ENCODE measurements at regions of chr17 and their contacts with region 1.

Region 1: GRCh38 chr17:28571255-28572122 is at the start of gene PIGS:
- DNase-seq: peak; percentile 78 to 95 (median 88)
- ATAC-seq: peak; percentile 96
- H3K4me3 ChIP-seq: peak within 1 kb of the TSS; percentile 95
- H3K4me3 Mint-ChIP-seq: peak within 1 kb of the TSS; percentile 94
- H3K27ac ChIP-seq: peak within 1 kb of the TSS; percentile 66 to 85
- H3K27ac Mint-ChIP-seq: peak within 1 kb of the TSS; percentile 91
- H3K4me1 ChIP-seq: peaks cover 55% of the 10 kb centered on the region
- H3K4me1 Mint-ChIP-seq: peaks cover 65% of the 10 kb centered on the region
- H3K27me3 ChIP-seq: no peaks in the 10 kb centered on the region
- H3K27me3 Mint-ChIP-seq: no peaks in the 10 kb centered on the region
- CTCF ChIP-seq: no peak
- total RNA-seq, gene PIGS: 73.8 to 76.4 TPM

Region 2: GRCh38 chr17:28252436-28252835 is 319.1 kb before region 1 on chr17:
- CTCF ChIA-PET with region 1: no interaction called
- POLR2A ChIA-PET with region 1: no interaction called
- intact Hi-C with region 1: no loop called
- DNase-seq: no peak
- ATAC-seq: no peak
- H3K4me3 ChIP-seq: no peak overlapping the region
- H3K4me3 Mint-ChIP-seq: no peak overlapping the region
- H3K27ac ChIP-seq: no peak overlapping the region
- H3K27ac Mint-ChIP-seq: no peak overlapping the region
- H3K4me1 ChIP-seq: peaks cover 12% of the 10 kb centered on the region
- H3K4me1 Mint-ChIP-seq: peaks cover 8% of the 10 kb centered on the region
- H3K27me3 ChIP-seq: peaks cover 15 to 29% of the 10 kb centered on the region in 2 experiments
- H3K27me3 Mint-ChIP-seq: peaks cover 49% of the 10 kb centered on the region
- CTCF ChIP-seq: no peak

Region 3: DNA sequence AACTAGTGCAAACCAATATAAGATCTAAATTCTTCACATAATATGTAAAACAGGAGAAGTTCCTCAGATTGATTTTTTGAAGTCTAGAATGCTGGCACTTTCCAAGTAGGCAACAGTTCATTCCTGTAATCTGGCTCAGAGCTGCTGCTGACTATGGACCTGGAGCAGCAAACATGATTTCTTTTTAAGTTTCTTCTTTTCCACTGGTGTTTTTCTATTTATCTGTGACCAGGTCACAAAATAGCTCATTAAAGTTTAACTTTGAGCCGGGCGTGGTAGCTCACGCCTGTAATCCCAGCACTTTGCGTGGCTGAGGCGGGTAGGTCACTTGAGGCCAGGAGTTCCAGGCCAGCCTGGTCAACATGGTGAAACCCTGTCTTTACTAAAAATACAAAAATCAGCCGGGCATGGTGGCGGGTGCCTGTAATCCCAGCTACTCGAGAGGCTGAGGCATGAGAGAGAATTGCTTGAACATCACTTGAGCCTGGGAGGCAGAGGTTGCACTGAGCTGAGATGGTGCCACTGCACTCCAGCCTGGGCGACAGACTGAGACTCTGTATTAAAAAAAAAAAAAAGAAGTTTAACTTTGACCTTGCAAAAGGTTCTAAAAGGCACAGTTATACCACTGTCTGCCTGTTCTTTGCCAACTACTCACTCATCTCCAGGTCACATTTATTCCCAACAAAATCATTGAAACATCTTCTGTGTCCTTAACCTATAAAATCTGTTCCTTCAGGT is 127.4 kb before region 1 on chr17:
- CTCF ChIA-PET with region 1: no interaction called
- POLR2A ChIA-PET with region 1: no interaction called
- intact Hi-C with region 1: no loop called
- DNase-seq: no peak
- ATAC-seq: no peak
- H3K4me3 ChIP-seq: no peak overlapping the region
- H3K4me3 Mint-ChIP-seq: no peak overlapping the region
- H3K27ac ChIP-seq: no peak overlapping the region
- H3K27ac Mint-ChIP-seq: no peak overlapping the region
- H3K4me1 ChIP-seq: no peaks in the 10 kb centered on the region
- H3K4me1 Mint-ChIP-seq: no peaks in the 10 kb centered on the region
- H3K27me3 ChIP-seq: peaks cover 4 to 5% of the 10 kb centered on the region in 2 experiments
- H3K27me3 Mint-ChIP-seq: peaks cover 26% of the 10 kb centered on the region
- CTCF ChIP-seq: no peak

Region 4: DNA sequence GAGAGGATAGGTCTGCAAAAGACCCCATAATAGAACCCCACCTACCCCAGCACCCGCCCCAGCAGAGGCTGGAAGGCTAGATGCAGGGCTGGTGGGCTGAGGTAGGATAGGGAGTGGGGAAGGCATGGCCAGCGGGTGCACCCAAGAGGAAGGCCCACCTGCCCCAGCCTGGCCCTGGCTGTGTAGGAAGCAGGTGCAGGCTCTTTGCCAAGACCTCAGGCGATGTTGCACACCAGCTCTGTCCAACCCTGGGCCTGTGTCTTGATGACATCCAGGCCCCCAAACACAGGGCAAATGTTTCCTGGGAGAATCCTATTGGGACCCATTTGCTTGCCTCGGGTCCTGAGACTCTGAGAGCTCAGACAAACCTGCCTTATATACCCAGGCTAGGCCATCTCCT is 31.3 kb before region 1 on chr17:
- CTCF ChIA-PET with region 1: no interaction called
- POLR2A ChIA-PET with region 1: no interaction called
- intact Hi-C with region 1: no loop called
- DNase-seq: no peak
- ATAC-seq: no peak
- H3K4me3 ChIP-seq: no peak overlapping the region
- H3K4me3 Mint-ChIP-seq: no peak overlapping the region
- H3K27ac ChIP-seq: no peak overlapping the region
- H3K27ac Mint-ChIP-seq: no peak overlapping the region
- H3K4me1 ChIP-seq: no peaks in the 10 kb centered on the region
- H3K4me1 Mint-ChIP-seq: no peaks in the 10 kb centered on the region
- H3K27me3 ChIP-seq: no peaks in the 10 kb centered on the region
- H3K27me3 Mint-ChIP-seq: no peaks in the 10 kb centered on the region
- CTCF ChIP-seq: no peak

Region 5: GRCh38 chr17:28661635-28662537 is 90.4 kb after region 1 on chr17 and contains the starts of genes SDF2 and SUPT6H:
- CTCF ChIA-PET with region 1: interaction called, 3 read pairs
- POLR2A ChIA-PET with region 1: interaction called, 13 read pairs
- intact Hi-C with region 1: no loop called
- DNase-seq: peak; percentile 88 to 97 (median 92)
- ATAC-seq: peak; percentile 83
- H3K4me3 ChIP-seq: peak within 1 kb of the TSS; percentile 81
- H3K4me3 Mint-ChIP-seq: peak within 1 kb of the TSS; percentile 99
- H3K27ac ChIP-seq: peak within 1 kb of the TSS; percentile 97 to 99
- H3K27ac Mint-ChIP-seq: peak within 1 kb of the TSS; percentile 99
- H3K4me1 ChIP-seq: peaks cover 45% of the 10 kb centered on the region
- H3K4me1 Mint-ChIP-seq: peaks cover 64% of the 10 kb centered on the region
- H3K27me3 ChIP-seq: no peaks in the 10 kb centered on the region
- H3K27me3 Mint-ChIP-seq: no peaks in the 10 kb centered on the region
- CTCF ChIP-seq: no peak
- total RNA-seq, gene SDF2: 30.3 to 32.0 TPM
- total RNA-seq, gene SUPT6H: 149 to 151 TPM

Measured in CD4-positive, alpha-beta T cell (primary cell).